GM10248 (cell line): ENCODE measurements at regions of chr1 and their contacts with region 1.

Region 1: GRCh38 chr1:17502326-17502778 is 37.1 kb upstream of the ARHGEF10L start:
- DNase-seq: peak; percentile 77
- CTCF ChIP-seq: peak; percentile 89

Region 2: DNA sequence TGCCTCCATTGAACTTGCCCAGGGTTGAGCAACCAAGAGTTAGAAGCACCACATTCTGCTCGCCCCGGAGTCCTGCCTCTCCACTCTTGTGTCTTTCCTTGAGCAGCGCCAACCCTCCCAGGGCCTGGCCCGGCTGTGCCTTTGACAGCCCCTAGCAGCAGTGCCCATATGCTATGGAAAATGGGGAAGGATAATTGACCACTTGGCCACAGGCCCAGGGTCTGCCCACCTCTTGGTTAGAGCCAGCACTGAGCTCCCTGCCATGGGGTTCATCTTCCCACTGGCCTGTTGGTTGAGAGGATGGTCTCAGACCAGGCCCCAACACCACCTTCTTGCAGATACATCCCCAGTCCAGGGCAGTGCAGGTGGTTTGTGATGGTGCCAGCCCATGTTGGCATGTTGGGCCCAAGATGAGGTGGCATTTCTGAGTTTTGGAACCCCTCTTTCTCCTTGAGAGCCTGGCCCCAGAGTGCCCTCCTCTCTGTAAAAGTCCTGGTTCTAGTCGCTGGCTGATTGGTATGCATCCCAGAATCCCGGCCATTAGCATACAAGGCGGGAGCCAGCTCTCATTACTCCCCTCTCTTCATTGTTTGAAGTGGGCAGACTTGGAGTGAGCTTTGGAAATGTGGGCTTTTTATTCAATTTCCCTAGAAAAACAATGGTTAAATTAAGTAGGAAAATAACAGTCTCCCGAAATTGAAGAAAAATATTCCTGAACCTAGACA is 44.8 kb after region 1 on chr1:
- CTCF ChIA-PET with region 1: interaction called, 10 read pairs
- POLR2A ChIA-PET with region 1: no interaction called
- DNase-seq: no peak
- CTCF ChIP-seq: no peak

Region 3: GRCh38 chr1:17574516-17574915 is 72.2 kb after region 1 on chr1:
- CTCF ChIA-PET with region 1: interaction called, 13 read pairs
- POLR2A ChIA-PET with region 1: no interaction called
- DNase-seq: no peak
- CTCF ChIP-seq: no peak

Region 4: DNA sequence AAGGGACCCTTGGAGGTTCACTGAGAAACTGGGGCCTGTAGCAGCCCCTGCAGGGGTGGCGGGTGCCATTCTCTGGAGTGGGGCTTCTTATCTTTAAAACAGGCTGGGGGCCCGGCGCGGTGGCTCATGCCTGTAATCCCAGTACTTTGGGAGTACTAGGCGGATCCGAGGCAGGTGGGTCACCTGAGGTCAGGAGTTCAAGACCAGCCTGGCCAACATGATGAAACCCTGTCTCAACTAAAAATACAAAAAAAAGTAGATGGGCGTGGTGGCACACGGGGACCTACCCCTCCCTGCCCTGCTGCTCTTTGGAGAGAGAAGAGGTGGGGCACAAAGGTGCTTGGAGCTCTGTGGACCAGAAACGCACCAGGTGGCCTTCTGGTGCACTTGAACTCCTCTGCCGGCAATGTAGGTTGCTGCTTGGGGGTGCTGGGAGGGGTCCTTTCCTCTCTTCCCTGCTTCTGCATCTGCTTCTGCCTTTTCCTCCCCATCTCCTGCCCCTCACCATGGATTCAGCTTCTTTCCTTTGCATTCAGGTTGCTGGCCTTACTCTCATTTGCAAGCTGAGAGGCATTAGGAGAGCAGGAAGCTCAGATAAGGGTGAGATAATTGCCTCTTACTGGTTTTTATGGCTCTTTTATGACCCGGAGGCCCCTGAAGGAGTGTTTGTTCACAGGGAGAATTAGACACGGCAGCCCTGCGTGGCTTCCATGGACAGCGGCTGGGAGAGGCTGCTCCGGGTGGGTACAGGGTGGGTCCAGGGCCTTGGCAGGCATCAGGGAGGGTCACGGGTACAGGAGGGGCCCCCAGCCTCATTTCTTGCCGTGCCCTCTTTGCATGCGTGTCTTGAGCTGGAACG is 94.5 kb after region 1 on chr1:
- CTCF ChIA-PET with region 1: interaction called, 14 read pairs
- POLR2A ChIA-PET with region 1: no interaction called
- DNase-seq: no peak
- CTCF ChIP-seq: no peak